Psoas muscle (tissue), 8 donors: ENCODE measurements at regions of chr17 and their contacts with region 1.

Region 1: GRCh38 chr17:17568749-17569195 is 22.7 kb downstream of the PEMT start:
- DNase-seq: peak; percentile 74 to 91
- ATAC-seq: peak; percentile 39 to 72 (median 56)
- H3K4me3 ChIP-seq: no peak overlapping the region
- H3K27ac ChIP-seq: no peak overlapping the region
- H3K4me1 ChIP-seq: peaks cover 41% of the 10 kb centered on the region
- H3K27me3 ChIP-seq: no peaks in the 10 kb centered on the region
- CTCF ChIP-seq: peak; percentile 76

Region 2: DNA sequence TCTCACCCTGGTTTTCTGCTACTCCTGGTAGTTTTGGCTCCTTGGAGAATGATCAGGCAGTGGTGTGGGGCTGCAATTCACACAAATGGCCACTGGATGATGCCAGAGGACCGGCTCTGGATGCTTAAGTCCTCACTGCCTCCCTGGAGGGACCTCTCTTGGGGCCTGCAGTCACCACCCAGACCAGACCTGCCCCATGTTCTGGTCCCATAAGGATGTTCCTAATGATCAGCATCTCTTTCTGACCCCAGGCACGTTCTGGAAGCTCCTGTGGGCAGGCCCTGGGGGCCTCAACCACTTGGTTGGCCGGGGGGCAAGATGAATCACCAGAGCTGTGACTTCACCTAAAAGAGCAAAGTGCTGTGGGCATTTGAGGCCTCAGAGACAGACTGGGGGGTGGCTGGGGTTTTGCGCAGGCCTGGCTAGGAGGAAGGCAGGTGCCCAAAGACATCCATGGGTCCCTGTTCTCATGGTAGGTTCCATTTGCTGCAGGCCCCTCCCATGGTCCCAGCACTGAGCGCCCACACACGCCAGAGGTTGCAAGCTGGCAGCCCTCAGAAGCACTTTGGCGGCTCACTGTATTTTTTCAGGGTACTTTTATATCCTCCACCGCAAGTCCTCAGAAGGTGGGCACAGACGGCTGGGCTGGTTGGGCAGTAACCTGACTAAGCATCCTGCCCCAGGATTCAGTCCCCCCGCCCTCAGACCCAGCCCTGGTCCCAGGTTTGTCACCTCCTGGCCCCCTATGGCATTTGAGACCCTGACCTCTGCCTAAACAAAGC is 212.4 kb before region 1 on chr17:
- intact Hi-C with region 1: loop called (anchors 1 to 2 kb)
- DNase-seq: peak; percentile 72 to 85
- ATAC-seq: peak; percentile 82 to 93 (median 82)
- H3K4me3 ChIP-seq: no peak overlapping the region
- H3K27ac ChIP-seq: no peak overlapping the region
- H3K4me1 ChIP-seq: peaks cover 9% of the 10 kb centered on the region
- H3K27me3 ChIP-seq: no peaks in the 10 kb centered on the region
- CTCF ChIP-seq: peak; percentile 99

Region 3: DNA sequence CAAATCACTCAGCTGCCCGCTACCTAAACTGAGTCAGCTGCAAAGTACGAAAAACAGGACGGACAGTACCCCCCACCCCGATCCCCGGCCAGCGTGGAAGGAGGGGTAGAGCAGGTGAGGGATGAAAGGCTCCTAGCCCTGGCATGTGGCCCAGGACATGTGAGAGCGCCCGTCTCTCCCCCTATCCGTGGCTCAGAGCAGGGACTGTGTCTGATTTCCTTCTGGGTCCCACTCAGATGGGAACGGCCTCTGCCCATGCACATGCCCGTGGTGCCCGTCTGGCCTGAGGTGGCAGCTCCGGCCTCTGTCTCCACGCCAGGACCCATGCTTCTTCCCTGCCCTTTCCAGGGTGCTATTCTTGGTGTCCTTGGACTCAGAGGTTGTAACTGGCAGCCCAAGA is 42.4 kb before region 1 on chr17:
- intact Hi-C with region 1: loop called (anchors 5 kb)
- DNase-seq: peak; percentile 71 to 94
- ATAC-seq: peak; percentile 86 to 89 (median 88)
- H3K4me3 ChIP-seq: peak overlapping the region; percentile 18
- H3K27ac ChIP-seq: peak overlapping the region; percentile 84
- H3K4me1 ChIP-seq: peaks cover 17% of the 10 kb centered on the region
- H3K27me3 ChIP-seq: no peaks in the 10 kb centered on the region
- CTCF ChIP-seq: no peak

Region 4: DNA sequence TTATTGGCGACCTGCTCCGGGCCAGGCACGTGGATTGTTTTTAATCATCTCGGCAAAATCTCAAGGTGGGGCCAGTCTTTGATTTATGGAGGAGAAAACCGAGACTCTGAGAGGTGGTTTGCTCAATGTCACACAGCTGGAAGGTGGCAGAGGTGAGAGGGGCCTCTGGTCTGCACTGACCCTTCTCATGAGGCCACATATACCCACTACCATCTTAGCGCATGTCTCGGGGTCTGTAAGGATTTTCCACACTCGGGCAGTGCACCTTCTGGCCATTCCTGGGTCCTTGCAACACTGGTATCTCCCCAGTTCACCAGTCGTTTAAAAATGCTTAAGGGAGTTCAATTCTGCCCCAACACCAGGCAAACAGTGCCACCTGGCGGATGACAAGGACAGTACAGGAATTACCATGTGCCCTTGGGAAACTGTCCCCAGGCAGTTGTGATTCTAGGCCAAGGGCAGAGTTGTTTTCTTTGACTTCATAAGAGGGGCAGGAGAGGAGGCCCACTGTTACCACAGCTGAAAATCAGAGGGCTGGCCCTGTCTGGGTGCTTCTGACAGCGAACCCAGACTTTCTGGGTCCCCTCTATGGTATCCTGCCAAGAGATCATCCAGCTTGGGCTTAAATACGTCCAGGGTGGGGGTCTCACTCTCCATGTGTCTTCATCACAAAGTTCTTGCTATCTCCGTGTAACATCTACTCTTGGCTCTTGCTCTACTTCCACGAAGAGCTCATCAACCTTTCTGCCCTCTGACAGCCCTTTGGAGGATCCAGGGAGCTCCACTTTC is 73.0 kb after region 1 on chr17:
- intact Hi-C with region 1: loop called in 1 of 2 experiments (anchors 5 kb)
- DNase-seq: peak; percentile 78 to 82
- ATAC-seq: peak; percentile 81 to 95 (median 90)
- H3K4me3 ChIP-seq: no peak overlapping the region
- H3K27ac ChIP-seq: no peak overlapping the region
- H3K4me1 ChIP-seq: no peaks in the 10 kb centered on the region
- H3K27me3 ChIP-seq: no peaks in the 10 kb centered on the region
- CTCF ChIP-seq: peak; percentile 91